Heart right ventricle (tissue), 16 donors: ENCODE measurements at regions of chr7 and their contacts with region 1.

Region 1: GRCh38 chr7:22445140-22445743 is 54.7 kb downstream of the STEAP1B start:
- DNase-seq: peak; percentile 81 to 86
- ATAC-seq: peak; percentile 91 to 97 (median 96)
- H3K4me3 ChIP-seq: peak overlapping the region in 2 of 10 donors; percentile 3 to 25
- H3K27ac ChIP-seq: peak overlapping the region; percentile 13 to 86 (median 75)
- H3K4me1 ChIP-seq: peaks cover 2 to 44% (median 36%) of the 10 kb centered on the region in 9 donors
- H3K27me3 ChIP-seq: no peaks in the 10 kb centered on the region
- CTCF ChIP-seq: no peak

Region 2: GRCh38 chr7:22356701-22357353 is 88.4 kb before region 1 on chr7 and contains the start of gene RAPGEF5:
- intact Hi-C with region 1: loop called in 3 of 10 experiments (anchors 10 kb)
- DNase-seq: peak in 1 of 2 donors; percentile 14
- ATAC-seq: peak in 7 of 8 donors; percentile 17 to 58 (median 35)
- H3K4me3 ChIP-seq: peak within 1 kb of the TSS; percentile 21 to 63 (median 50)
- H3K27ac ChIP-seq: peak within 1 kb of the TSS in 6 of 10 donors; percentile 23 to 59 (median 32)
- H3K4me1 ChIP-seq: peaks cover 0 to 22% (median 8%) of the 10 kb centered on the region in 9 donors
- H3K27me3 ChIP-seq: peaks cover 0 to 41% (median 19%) of the 10 kb centered on the region in 7 donors
- CTCF ChIP-seq: peak in 2 of 9 donors; percentile 5 to 9
- total RNA-seq, gene RAPGEF5: 9.2 to 33.3 (median 15.3) TPM

Region 3: DNA sequence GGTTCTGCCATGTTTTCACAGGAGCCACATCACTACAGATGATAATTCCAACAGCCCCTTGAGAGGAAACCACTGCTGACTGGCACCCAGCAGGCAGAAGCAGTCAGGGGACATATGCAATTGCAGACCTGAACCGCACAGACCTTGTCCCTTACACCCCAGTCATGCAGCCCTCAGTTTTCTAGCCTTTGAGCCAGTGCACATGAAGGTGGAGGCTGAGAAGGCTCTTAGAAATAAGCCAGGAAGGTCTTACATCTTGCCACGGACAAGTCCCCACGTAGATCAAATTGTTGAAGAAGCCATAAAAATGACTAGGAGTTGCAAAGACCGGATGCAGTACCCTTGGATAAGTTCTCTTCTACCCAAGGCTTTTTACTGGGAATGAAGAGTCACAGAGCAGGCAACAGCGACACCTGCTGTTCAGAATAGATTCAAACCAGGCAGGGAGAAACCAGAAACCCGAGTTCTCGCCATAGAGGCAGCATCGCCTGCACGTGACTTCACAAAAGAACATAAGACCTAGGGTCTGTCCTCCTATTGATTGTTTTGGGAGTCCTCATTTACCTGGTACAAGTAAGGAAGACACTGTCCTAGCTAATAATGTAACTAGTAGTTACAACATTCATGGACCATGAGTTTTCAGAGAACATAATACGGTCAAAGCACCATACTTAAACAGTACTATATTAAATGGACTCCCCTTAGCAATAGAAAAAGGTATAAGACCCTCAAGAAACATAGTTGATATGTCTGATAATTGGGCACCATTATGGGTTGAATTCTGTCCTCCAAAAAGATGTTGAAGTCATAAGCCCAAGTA is 43.6 kb after region 1 on chr7:
- intact Hi-C with region 1: no loop called
- DNase-seq: peak in 1 of 2 donors; percentile 68
- ATAC-seq: peak; percentile 76 to 93 (median 83)
- H3K4me3 ChIP-seq: no peak overlapping the region
- H3K27ac ChIP-seq: no peak overlapping the region
- H3K4me1 ChIP-seq: peaks cover 0 to 11% (median 0%) of the 10 kb centered on the region in 9 donors
- H3K27me3 ChIP-seq: peaks cover 0 to 6% (median 0%) of the 10 kb centered on the region in 7 donors
- CTCF ChIP-seq: peak; percentile 77 to 97 (median 92)